Ascending aorta (tissue), 2 donors: ENCODE measurements at regions of chr2 and their contacts with region 1.

Region 1: DNA sequence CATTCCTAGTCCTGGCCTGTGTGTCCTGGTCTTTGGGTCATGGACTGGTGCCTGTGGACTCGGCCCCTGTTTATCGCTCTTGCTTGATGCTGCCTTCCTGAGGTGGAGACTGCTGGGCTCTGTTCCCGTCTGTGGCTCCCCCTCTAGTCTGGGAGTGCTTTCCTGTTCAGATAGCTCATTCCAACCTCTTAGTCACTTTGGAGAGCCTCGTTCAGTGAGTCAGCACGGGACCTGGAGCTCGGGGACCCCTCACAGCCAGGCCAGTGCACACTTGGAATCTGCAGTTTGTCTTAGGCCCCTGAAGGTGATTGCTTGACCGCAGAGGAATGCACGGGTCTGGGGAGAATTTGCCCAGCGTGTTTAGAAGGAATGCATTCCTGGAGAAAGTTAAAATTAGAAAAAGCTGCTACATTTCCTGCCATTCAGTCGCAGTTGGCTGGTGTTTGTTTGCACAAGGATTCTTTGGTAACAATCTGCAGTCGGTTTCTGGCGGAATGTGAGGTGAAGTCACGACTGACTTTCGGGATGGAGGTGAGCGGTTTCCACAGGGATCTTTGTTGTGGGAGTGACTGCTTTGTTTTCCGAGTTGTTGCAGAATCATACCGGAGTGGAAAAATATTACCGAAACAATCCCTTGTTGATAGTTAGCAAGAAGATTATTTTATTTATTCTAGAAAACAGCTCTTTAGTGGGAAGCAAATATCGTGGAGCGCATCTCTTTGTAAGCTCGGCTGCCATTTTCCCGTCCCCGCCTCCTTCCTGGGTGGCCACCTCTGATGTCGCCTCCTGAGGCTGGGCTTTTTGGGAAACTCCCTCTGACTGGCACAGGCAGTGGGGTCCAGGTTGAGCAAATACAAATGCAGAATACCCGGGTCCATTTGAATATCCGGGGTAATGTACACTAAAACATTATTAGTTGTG is 29.6 kb downstream of the SH3BP4 start:
- DNase-seq: peak; percentile 35 to 94
- H3K4me3 ChIP-seq: peak overlapping the region; percentile 12 to 19
- H3K27ac ChIP-seq: peak overlapping the region; percentile 57 to 90
- H3K4me1 ChIP-seq: peaks cover 9 to 42% of the 10 kb centered on the region in 2 donors
- H3K27me3 ChIP-seq: no peaks in the 10 kb centered on the region
- CTCF ChIP-seq: peak in 1 of 3 experiments; percentile 7

Region 2: GRCh38 chr2:234792621-234793022 is 188.8 kb before region 1 on chr2:
- intact Hi-C with region 1: no loop called
- DNase-seq: no peak
- H3K4me3 ChIP-seq: no peak overlapping the region
- H3K27ac ChIP-seq: no peak overlapping the region
- H3K4me1 ChIP-seq: no peaks in the 10 kb centered on the region
- H3K27me3 ChIP-seq: no peaks in the 10 kb centered on the region
- CTCF ChIP-seq: no peak

Region 3: GRCh38 chr2:234951664-234952269 is 29.7 kb before region 1 on chr2 and contains the start of gene SH3BP4:
- intact Hi-C with region 1: loop called (anchors 1 kb)
- DNase-seq: peak; percentile 26 to 89
- H3K4me3 ChIP-seq: peak within 1 kb of the TSS; percentile 86 to 96
- H3K27ac ChIP-seq: peak within 1 kb of the TSS; percentile 80 to 82
- H3K4me1 ChIP-seq: peaks cover 3 to 8% of the 10 kb centered on the region in 2 donors
- H3K27me3 ChIP-seq: no peaks in the 10 kb centered on the region
- CTCF ChIP-seq: no peak
- total RNA-seq, gene SH3BP4: 36.7 TPM

Region 4: GRCh38 chr2:235050992-235051351 is 69.5 kb after region 1 on chr2:
- intact Hi-C with region 1: loop called (anchors 5 kb)
- DNase-seq: peak; percentile 90 to 97
- H3K4me3 ChIP-seq: no peak overlapping the region
- H3K27ac ChIP-seq: peak overlapping the region; percentile 47 to 67
- H3K4me1 ChIP-seq: peaks cover 6 to 13% of the 10 kb centered on the region in 2 donors
- H3K27me3 ChIP-seq: no peaks in the 10 kb centered on the region
- CTCF ChIP-seq: no peak

Region 5: DNA sequence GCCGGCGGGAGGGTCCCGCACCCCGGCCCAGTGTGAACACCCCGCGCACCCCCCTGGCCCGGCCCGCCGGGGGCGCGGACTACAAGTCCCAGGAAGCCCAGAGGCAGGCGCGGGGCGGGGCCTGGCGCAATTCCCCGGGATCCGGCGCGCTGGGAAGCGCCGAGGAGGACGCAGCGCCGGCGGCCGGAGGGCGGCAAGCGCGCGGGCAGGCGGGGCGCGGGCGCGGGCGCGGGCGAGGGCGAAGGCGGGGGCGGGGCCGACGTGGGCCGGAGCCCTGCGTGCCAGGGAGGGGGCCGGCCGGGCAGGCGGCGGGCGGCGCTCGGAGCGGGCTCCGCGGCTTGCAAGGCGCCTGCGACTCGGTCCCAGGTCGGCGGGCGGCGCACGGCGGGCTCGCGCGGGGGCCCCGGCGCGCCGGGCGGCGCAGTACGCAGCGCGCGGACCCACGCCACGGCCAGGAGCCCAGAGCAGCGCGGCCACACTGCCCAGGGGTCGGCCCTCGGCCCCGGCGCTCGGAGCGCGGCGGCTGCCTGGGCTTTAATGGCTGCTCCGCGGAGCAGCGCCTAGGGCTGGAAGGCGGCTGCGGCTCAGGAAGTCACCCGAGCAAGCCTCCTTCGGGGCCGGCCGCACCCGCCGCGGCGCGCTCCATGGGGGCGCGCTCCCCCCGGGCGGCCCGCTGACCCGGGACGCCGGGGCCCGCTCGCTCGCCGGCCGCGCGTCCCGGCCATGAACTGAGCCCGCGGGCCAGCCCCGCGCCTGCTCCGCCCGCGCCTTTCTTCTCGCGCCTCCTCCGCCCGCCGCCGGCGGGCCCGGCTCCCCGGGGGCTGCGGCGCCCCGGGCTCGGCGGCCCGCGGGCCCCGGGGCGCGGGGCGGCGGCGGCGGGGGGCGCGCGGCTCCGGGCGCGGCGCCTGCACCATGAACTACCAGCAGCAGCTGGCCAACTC is 512.6 kb after region 1 on chr2 and contains the start of gene AGAP1:
- intact Hi-C with region 1: loop called (anchors 10 kb)
- DNase-seq: peak in 1 of 2 donors; percentile 93
- H3K4me3 ChIP-seq: peak within 1 kb of the TSS; percentile 76 to 84
- H3K27ac ChIP-seq: peak within 1 kb of the TSS; percentile 61 to 83
- H3K4me1 ChIP-seq: peaks cover 3 to 15% of the 10 kb centered on the region in 2 donors
- H3K27me3 ChIP-seq: no peaks in the 10 kb centered on the region
- CTCF ChIP-seq: no peak
- total RNA-seq, gene AGAP1: 19.7 TPM